Mammary epithelial cell (primary cell): ENCODE measurements at regions of chr17 and their contacts with region 1.

Region 1: DNA sequence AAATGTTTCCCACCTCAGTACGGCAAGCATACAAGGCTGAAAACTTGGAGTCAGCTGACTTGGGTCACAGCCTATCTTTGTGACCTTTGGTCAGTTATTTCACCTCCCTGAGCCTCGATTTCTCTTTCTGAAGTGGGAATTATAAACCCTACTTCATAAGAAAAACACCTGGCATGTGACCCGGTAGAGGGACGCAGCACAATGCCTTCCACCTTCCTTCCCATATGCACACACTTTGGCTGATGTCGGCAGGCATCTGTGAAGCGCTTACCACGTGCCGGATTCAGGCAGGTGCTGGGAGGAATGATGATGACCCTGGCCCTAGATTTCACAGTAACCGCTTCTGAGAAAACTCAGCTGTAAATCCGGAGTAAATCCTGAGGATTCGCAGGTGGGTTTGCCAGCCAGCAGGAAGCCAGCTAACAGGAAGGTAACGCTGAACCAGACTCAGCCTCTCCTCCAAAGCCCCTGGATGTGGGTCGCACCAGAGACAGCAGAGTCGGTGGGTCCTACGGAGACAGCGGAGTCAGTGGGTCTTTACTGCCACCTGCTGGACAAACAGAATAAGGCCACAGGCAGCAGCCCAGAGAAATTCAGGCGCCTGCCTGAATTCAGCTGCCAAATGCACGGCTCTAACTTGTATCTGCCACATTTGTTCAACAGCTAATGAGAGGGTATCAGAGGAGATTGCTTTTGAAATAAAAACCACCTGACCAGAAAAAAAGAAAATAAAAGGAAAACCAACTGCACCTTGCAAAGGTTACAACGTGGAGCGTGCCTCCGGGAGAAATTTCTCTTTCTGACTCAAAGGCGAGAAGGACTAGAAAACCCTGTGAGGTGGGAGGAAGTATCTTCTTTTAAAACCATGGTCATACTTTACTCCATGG is 16.6 kb downstream of the COPRS start:
- DNase-seq: no peak
- H3K4me3 ChIP-seq: peak overlapping the region in 1 of 3 experiments; percentile 22
- H3K27ac ChIP-seq: no peak overlapping the region
- H3K4me1 ChIP-seq: no peaks in the 10 kb centered on the region
- H3K27me3 ChIP-seq: no peaks in the 10 kb centered on the region
- CTCF ChIP-seq: peak; percentile 85 to 95

Region 2: GRCh38 chr17:31008374-31009041 is 833.9 kb before region 1 on chr17:
- CTCF ChIA-PET with region 1: interaction called, 11 read pairs
- dilution Hi-C with region 1: no loop called
- in situ Hi-C with region 1: no loop called
- intact Hi-C with region 1: no loop called
- DNase-seq: peak; percentile 72
- H3K4me3 ChIP-seq: peak overlapping the region; percentile 59 to 67 (median 60)
- H3K27ac ChIP-seq: peak overlapping the region; percentile 27
- H3K4me1 ChIP-seq: peaks cover 8% of the 10 kb centered on the region
- H3K27me3 ChIP-seq: no peaks in the 10 kb centered on the region
- CTCF ChIP-seq: peak in 1 of 2 donors; percentile 10

Region 3: GRCh38 chr17:31425282-31426040 is 417.0 kb before region 1 on chr17:
- CTCF ChIA-PET with region 1: no interaction called
- dilution Hi-C with region 1: no loop called
- in situ Hi-C with region 1: loop called (anchors 10 to 25 kb)
- intact Hi-C with region 1: no loop called
- DNase-seq: no peak
- H3K4me3 ChIP-seq: no peak overlapping the region
- H3K27ac ChIP-seq: no peak overlapping the region
- H3K4me1 ChIP-seq: no peaks in the 10 kb centered on the region
- H3K27me3 ChIP-seq: no peaks in the 10 kb centered on the region
- CTCF ChIP-seq: no peak

Region 4: GRCh38 chr17:31524926-31525800 is 317.3 kb before region 1 on chr17:
- CTCF ChIA-PET with region 1: no interaction called
- dilution Hi-C with region 1: no loop called
- in situ Hi-C with region 1: no loop called
- intact Hi-C with region 1: loop called (anchors 1 kb)
- DNase-seq: peak; percentile 81
- H3K4me3 ChIP-seq: no peak overlapping the region
- H3K27ac ChIP-seq: no peak overlapping the region
- H3K4me1 ChIP-seq: peaks cover 5% of the 10 kb centered on the region
- H3K27me3 ChIP-seq: no peaks in the 10 kb centered on the region
- CTCF ChIP-seq: peak; percentile 91 to 98

Region 5: GRCh38 chr17:31533546-31534155 is 308.8 kb before region 1 on chr17:
- CTCF ChIA-PET with region 1: no interaction called
- dilution Hi-C with region 1: no loop called
- in situ Hi-C with region 1: no loop called
- intact Hi-C with region 1: loop called (anchors 1 kb)
- DNase-seq: peak; percentile 69
- H3K4me3 ChIP-seq: no peak overlapping the region
- H3K27ac ChIP-seq: no peak overlapping the region
- H3K4me1 ChIP-seq: peaks cover 11% of the 10 kb centered on the region
- H3K27me3 ChIP-seq: no peaks in the 10 kb centered on the region
- CTCF ChIP-seq: peak; percentile 4 to 19

Region 6: DNA sequence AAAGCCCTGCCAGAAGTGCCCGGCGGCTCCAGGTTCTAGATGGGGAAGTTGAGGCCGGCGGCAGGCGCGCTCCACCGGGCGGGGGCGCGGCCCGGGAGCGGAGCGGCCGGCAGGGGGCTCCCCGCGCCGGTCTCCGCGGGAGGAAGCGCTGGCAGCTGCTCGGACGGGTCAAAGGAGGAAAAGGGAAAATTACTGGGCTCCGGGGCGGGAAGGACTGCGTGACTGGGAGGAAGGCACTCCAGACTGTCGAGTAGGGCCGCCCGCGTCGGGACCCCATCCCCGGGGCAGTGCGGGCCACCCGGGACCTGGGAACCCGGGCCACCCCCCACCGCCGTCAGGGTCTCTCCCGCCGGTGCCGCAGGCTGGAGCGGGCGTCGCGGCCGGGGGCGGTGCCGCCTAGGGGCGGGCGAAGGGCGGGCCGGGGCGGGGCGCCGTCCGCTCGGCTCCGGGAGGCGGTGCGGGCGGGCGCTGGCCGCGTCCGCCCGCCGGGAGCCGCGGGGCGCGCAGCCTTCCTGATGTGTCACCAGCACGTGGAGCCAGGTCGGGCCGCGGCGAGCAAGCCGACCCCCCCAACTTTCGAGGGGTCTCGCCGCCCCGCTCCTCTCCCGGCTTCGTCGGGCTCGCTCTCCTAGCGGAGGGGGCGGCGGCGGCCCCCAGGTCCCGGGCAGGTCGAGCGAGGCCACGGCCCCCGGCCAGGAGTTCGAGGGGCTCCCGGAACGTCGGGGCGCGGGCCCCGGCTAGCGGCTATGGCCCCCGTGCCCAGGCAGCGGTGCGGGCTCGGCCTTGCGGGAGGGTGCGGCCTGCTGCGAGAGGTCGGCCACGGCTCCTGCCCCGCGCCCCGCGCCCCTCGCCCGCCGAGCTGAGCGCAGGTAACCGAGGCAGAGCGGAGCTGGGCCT is 283.4 kb before region 1 on chr17:
- CTCF ChIA-PET with region 1: no interaction called
- dilution Hi-C with region 1: no loop called
- in situ Hi-C with region 1: loop called (anchors 5 kb)
- intact Hi-C with region 1: loop called (anchors 1 kb)
- DNase-seq: peak; percentile 70
- H3K4me3 ChIP-seq: peak overlapping the region; percentile 39 to 53 (median 51)
- H3K27ac ChIP-seq: peak overlapping the region; percentile 17
- H3K4me1 ChIP-seq: peaks cover 8% of the 10 kb centered on the region
- H3K27me3 ChIP-seq: no peaks in the 10 kb centered on the region
- CTCF ChIP-seq: peak; percentile 36 to 67

Region 7: DNA sequence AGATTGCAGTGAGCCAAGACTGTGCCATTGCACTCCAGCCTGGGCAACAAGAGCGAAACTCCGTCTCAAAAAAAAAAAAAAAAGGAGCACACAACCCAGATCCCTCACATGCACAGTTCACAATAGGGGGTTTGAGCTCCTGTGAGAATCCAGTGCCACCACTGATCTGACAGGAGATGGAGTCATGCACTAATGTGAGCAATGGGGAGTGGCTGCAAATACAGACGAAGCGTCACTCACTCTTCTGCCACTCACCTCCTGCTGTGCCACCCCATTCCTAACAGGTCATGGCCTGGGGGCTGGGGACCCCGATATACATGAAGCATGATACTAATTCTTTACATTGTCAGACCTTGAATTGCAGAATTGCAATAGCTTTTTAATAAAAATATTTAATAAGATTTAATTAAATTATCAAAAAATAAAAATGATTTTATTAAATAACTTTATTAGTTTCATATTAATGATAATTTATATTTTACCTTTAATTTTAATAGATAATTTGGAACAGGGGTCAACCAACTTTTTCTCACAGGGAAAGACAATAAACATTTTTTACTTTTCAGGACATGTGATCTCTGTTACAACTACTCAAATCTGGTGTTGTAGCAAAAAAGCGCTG is 154.8 kb before region 1 on chr17:
- CTCF ChIA-PET with region 1: no interaction called
- dilution Hi-C with region 1: no loop called
- in situ Hi-C with region 1: no loop called
- intact Hi-C with region 1: loop called (anchors 2 kb)
- DNase-seq: no peak
- H3K4me3 ChIP-seq: no peak overlapping the region
- H3K27ac ChIP-seq: no peak overlapping the region
- H3K4me1 ChIP-seq: no peaks in the 10 kb centered on the region
- H3K27me3 ChIP-seq: no peaks in the 10 kb centered on the region
- CTCF ChIP-seq: no peak

Region 8: GRCh38 chr17:31888124-31888523 is 45.7 kb after region 1 on chr17:
- CTCF ChIA-PET with region 1: no interaction called
- dilution Hi-C with region 1: no loop called
- in situ Hi-C with region 1: no loop called
- intact Hi-C with region 1: no loop called
- DNase-seq: no peak
- H3K4me3 ChIP-seq: no peak overlapping the region
- H3K27ac ChIP-seq: no peak overlapping the region
- H3K4me1 ChIP-seq: no peaks in the 10 kb centered on the region
- H3K27me3 ChIP-seq: no peaks in the 10 kb centered on the region
- CTCF ChIP-seq: no peak